Endothelial cell of umbilical vein (primary cell): ENCODE measurements at regions of chr13 and their contacts with region 1.

Region 1: GRCh38 chr13:52665325-52665724 is 12.7 kb downstream of the SUGT1 start:
- DNase-seq: peak; percentile 46
- H3K4me3 ChIP-seq: no peak overlapping the region
- H3K27ac ChIP-seq: no peak overlapping the region
- H3K4me1 ChIP-seq: no peaks in the 10 kb centered on the region
- H3K27me3 ChIP-seq: no peaks in the 10 kb centered on the region
- CTCF ChIP-seq: peak in 1 of 2 donors; percentile 34
- POLR2A ChIP-seq: no peak

Region 2: DNA sequence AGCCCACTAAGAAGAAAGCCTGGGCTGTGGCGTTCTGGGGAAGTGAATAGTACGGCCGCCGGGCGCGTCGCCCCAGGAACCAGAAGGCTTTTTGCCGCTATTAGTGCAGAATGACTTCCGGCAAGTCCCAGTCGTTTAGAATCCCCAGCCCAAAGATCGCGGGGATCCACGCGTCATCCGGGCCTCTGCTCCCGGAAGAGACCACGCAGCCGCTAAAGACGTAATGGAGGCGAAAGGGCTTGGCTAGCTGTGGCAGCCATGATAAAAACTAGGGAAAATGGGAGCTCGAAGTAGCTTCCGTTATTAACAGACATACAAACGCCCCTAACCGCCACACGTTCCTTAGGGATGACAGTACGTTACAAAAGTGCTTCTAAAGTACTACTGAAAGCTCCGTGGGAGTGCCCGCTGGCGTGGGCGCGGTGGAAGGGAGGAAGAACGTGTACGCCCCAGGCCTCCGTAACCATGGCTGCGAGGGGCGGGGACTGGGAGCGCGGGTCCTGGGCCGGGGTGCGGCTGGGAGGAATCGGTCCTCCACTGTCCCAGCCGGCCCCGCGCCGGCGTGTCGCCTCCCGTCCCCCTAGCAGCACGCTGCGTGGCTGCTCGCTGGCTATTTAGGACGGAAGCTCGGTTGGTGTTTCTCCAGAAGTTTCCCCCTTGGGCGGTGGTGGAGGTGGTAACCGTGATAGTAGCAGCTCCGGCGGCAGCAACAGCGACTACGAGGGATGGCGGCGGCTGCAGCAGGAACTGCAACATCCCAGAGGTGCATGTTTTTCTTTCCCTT is 12.9 kb before region 1 on chr13 and contains the start of gene SUGT1:
- CTCF ChIA-PET with region 1: interaction called, 46 read pairs
- POLR2A ChIA-PET with region 1: interaction called, 3 read pairs
- dilution Hi-C with region 1: no loop called
- intact Hi-C with region 1: no loop called
- DNase-seq: peak; percentile 98
- H3K4me3 ChIP-seq: peak within 1 kb of the TSS; percentile 67 to 100 (median 100)
- H3K27ac ChIP-seq: peak within 1 kb of the TSS; percentile 84
- H3K4me1 ChIP-seq: peaks cover 22% of the 10 kb centered on the region
- H3K27me3 ChIP-seq: no peaks in the 10 kb centered on the region
- CTCF ChIP-seq: peak; percentile 59 to 71
- POLR2A ChIP-seq: peak; percentile 95
- total RNA-seq, gene SUGT1: 74.2 and 78.8 TPM in 2 replicates

Region 3: GRCh38 chr13:52686381-52686780 is 21.1 kb after region 1 on chr13:
- CTCF ChIA-PET with region 1: interaction called, 14 read pairs
- POLR2A ChIA-PET with region 1: no interaction called
- dilution Hi-C with region 1: no loop called
- intact Hi-C with region 1: no loop called
- DNase-seq: no peak
- H3K4me3 ChIP-seq: no peak overlapping the region
- H3K27ac ChIP-seq: no peak overlapping the region
- H3K4me1 ChIP-seq: no peaks in the 10 kb centered on the region
- H3K27me3 ChIP-seq: no peaks in the 10 kb centered on the region
- CTCF ChIP-seq: no peak
- POLR2A ChIP-seq: no peak

Region 4: DNA sequence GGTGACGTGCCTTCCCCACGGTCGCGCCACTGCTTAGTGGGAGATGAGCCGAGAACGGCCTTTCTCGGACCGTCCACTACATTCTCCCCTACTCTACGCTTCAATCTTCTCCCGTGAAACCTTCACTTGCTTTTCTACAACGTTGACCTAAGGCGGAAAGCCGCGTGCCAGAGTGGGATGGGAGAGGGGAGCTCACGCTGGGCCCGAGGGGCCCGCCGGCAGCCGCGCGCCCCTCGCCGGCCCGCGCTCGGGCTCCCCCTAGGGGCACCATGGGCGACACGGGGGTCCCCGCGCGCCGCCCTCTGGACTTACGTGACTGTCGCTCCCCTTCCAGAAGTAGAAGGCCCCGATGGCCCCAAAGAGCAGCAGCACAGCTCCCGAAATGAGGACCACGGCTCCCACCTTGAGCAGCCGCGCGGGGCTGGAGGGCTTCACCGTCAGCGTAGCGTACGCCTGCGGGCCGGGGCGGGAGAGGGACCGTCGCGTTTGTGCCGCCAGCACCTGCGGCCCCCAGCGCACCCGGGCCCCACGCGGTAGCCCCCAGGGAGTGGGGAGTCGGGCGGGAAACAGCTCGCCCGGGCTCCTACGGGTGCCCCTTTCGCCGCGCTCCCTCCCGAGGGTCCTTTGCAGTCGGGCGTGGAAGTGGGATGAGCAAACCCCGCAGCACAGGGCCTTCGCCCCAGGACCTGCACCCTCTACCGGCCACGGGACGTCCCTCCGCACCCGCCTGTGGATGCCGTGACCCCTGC is 73.6 kb after region 1 on chr13:
- CTCF ChIA-PET with region 1: interaction called, 27 read pairs
- POLR2A ChIA-PET with region 1: no interaction called
- dilution Hi-C with region 1: no loop called
- intact Hi-C with region 1: loop called (anchors 1 kb)
- DNase-seq: peak; percentile 15
- H3K4me3 ChIP-seq: peak overlapping the region; percentile 17 to 24 (median 23)
- H3K27ac ChIP-seq: no peak overlapping the region
- H3K4me1 ChIP-seq: peaks cover 6% of the 10 kb centered on the region
- H3K27me3 ChIP-seq: peaks cover 28 to 56% of the 10 kb centered on the region in 2 experiments
- CTCF ChIP-seq: peak; percentile 61 to 63
- POLR2A ChIP-seq: no peak

Region 5: DNA sequence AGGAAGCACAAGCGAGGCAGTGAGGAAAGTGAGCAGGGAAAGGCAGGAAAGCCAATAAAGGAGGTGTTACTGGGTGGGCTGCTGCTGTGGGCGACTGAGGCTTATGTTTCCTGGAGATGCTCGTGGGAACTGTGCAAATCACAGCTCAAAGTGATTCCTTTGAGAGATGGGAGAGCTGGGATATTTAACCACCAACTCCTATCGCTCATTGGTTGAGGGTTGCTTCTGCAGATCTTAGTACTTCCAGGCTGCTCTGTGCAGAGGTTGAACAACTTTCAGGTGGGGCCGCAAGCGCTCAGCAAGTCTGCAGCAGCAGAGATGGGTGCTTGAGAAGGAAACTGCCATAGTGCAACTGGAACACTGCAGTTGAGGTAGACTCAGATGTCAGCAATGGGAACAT is 174.7 kb after region 1 on chr13:
- CTCF ChIA-PET with region 1: interaction called, 3 read pairs
- POLR2A ChIA-PET with region 1: no interaction called
- dilution Hi-C with region 1: no loop called
- intact Hi-C with region 1: loop called (anchors 2 kb)
- DNase-seq: no peak
- H3K4me3 ChIP-seq: no peak overlapping the region
- H3K27ac ChIP-seq: no peak overlapping the region
- H3K4me1 ChIP-seq: no peaks in the 10 kb centered on the region
- H3K27me3 ChIP-seq: peaks cover 8 to 19% of the 10 kb centered on the region in 2 experiments
- CTCF ChIP-seq: no peak
- POLR2A ChIP-seq: no peak

Region 6: GRCh38 chr13:52968074-52968700 is 302.9 kb after region 1 on chr13:
- CTCF ChIA-PET with region 1: interaction called, 73 read pairs
- POLR2A ChIA-PET with region 1: no interaction called
- dilution Hi-C with region 1: no loop called
- intact Hi-C with region 1: loop called (anchors 2 kb)
- DNase-seq: peak; percentile 56
- H3K4me3 ChIP-seq: no peak overlapping the region
- H3K27ac ChIP-seq: no peak overlapping the region
- H3K4me1 ChIP-seq: no peaks in the 10 kb centered on the region
- H3K27me3 ChIP-seq: no peaks in the 10 kb centered on the region
- CTCF ChIP-seq: peak; percentile 83 to 95
- POLR2A ChIP-seq: no peak